H1 (cell line): ENCODE measurements at regions of chr9 and their contacts with region 1.

Region 1: GRCh38 chr9:131590908-131591844 is 45.9 kb downstream of the PRRT1B start:
- DNase-seq: peak; percentile 49 to 77
- H3K4me3 ChIP-seq: no peak overlapping the region
- H3K27ac ChIP-seq: no peak overlapping the region
- H3K4me1 ChIP-seq: no peaks in the 10 kb centered on the region
- H3K27me3 ChIP-seq: no peaks in the 10 kb centered on the region
- CTCF ChIP-seq: peak in 2 of 3 experiments; percentile 92 to 98; a peak in 3 of 4 replicates
- EP300 ChIP-seq: no peak
- POLR2A ChIP-seq: no peak
- RAD21 ChIP-seq: peak; percentile 93 to 95

Region 2: DNA sequence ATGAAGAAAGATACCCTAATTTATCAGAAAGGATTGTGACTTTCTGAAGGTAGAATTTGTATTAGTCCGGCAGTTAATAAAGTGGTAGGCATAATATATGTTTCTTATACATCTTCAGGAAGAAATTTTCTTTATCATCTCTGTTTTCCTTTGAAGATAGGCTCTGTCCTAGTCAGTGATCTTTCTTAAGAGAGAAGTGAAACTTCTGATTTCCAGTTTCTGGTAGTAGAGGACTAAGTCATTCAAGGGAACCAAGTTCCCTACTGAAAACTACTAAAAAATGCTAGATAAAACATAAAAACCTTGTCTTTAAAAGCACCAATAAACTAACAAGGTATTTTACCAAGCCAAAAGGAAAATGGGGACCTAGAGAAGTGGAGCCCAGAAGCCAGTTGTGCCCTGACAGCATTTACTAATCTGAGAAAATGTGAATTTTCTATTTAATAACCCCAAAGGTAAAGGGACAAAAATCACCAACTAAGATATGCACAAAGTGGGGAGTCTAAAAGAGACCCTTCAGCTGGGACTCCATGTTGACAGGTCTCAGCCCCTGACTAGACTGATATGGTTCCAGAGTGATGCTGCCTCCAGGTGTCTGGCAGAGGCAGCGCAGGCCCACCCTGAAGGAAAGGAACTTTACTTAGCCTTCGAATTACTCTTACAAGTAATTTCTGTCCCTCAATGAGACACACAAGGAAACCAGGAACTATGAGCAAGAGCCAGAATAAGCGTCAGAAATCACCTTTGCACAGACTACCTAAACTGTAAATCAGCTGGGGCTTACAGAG is 387.6 kb before region 1 on chr9:
- CTCF ChIA-PET with region 1: no interaction called
- POLR2A ChIA-PET with region 1: no interaction called
- DNase-seq: no peak
- H3K4me3 ChIP-seq: peak overlapping the region in 1 of 4 experiments; percentile 18; a peak in 1 of 8 replicates
- H3K27ac ChIP-seq: no peak overlapping the region
- H3K4me1 ChIP-seq: peaks cover 0 to 6% (median 2%) of the 10 kb centered on the region in 4 experiments; a peak in 2 of 7 replicates
- H3K27me3 ChIP-seq: no peaks in the 10 kb centered on the region
- CTCF ChIP-seq: peak; percentile 65 to 80 (median 79)
- EP300 ChIP-seq: no peak
- POLR2A ChIP-seq: no peak
- RAD21 ChIP-seq: peak; percentile 47 to 63

Region 3: DNA sequence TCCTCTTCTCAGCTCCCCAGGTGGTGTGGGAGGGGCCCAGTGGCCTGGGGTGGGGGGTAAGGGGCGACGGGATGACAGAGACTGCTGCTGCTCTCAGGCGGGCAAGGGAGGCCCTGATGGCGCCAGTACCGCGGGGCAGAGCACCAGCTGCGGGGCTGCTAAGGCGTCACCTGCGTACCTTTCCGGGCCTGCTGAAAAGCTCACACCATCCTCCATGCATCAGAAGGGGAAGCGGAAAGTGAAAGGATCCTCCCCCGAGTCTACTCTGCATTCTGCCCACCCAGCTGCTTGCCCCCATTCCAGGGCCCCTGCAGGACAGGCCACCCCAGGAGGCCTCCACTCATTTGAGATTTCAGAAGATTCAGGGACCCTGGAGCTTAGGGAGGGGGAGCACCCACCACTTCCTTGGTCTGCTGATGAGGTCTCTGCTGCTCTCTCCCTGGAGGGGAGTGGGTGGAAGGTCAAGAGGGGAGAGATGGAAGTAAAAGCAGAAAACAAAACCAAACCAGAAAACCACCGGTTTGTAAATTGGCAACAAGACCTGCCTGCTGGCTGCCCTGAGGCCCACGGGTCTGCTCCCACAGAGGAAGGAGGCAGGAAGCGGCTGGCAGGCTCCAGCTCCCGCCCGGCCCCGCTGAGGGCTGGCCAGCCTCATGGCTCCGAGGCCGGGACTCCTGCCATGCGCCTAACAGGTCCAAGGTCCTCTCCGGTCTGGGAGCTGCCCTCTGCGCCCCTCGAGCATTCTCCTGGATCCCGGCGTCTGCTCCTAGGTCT is 12.3 kb before region 1 on chr9:
- CTCF ChIA-PET with region 1: interaction called, 10 read pairs
- POLR2A ChIA-PET with region 1: no interaction called
- DNase-seq: no peak
- H3K4me3 ChIP-seq: no peak overlapping the region
- H3K27ac ChIP-seq: no peak overlapping the region
- H3K4me1 ChIP-seq: no peaks in the 10 kb centered on the region; a peak in 1 of 7 replicates
- H3K27me3 ChIP-seq: no peaks in the 10 kb centered on the region
- CTCF ChIP-seq: no peak
- EP300 ChIP-seq: no peak
- POLR2A ChIP-seq: no peak
- RAD21 ChIP-seq: no peak

Region 4: DNA sequence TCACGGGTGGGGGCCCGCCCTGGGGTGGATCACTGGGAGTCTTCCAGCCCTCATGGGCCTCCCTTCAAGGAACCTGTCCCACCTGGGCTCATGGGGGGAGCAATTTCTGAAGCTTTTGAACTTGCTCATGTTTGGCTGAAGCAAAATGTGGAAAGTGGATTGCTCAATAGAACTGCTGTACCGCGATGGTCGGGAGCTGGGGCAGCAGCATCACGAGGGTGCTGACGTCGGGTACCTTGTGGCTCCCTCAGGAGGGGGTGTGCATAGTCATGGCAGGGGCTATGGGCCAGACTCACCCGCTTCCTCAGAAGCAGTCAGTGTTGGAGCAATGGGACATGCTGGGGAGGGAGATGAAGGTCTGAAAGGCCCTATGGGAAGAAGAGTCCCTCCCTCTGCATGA is 12.0 kb after region 1 on chr9:
- CTCF ChIA-PET with region 1: interaction called, 21 read pairs
- POLR2A ChIA-PET with region 1: interaction called, 3 read pairs
- DNase-seq: no peak
- H3K4me3 ChIP-seq: no peak overlapping the region
- H3K27ac ChIP-seq: no peak overlapping the region
- H3K4me1 ChIP-seq: peaks cover 0 to 11% (median 7%) of the 10 kb centered on the region in 4 experiments; a peak in 6 of 7 replicates
- H3K27me3 ChIP-seq: no peaks in the 10 kb centered on the region
- CTCF ChIP-seq: no peak
- EP300 ChIP-seq: no peak
- POLR2A ChIP-seq: no peak
- RAD21 ChIP-seq: no peak

Region 5: DNA sequence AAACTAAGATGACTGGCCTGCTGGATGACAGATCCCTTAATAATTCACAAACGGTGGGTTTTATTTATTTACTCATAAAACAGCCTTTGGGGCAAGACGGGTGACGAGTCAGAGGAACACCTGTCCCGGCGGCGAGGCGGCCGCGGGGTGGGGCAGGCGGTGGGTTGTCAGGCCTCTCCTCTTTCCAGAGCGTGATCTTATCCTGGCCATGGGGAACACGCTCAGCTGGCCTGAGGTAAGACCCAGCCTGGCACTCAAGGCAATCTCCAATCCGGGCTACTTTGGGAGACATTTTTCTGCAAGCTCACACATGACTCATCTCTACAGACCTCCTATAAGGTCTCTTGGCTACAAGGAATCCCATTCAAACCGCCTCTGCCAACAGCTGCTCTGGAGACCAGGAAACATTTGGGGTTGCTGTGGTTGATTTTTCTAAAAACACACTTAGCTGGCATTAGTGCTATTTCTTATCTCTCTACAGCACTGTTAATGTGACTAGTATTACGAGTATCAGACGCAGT is 142.4 kb after region 1 on chr9:
- CTCF ChIA-PET with region 1: interaction called, 82 read pairs
- POLR2A ChIA-PET with region 1: no interaction called
- DNase-seq: no peak
- H3K4me3 ChIP-seq: no peak overlapping the region
- H3K27ac ChIP-seq: no peak overlapping the region
- H3K4me1 ChIP-seq: peaks cover 0 to 15% (median 4%) of the 10 kb centered on the region in 4 experiments; a peak in 5 of 7 replicates
- H3K27me3 ChIP-seq: no peaks in the 10 kb centered on the region
- CTCF ChIP-seq: no peak
- EP300 ChIP-seq: no peak
- POLR2A ChIP-seq: no peak
- RAD21 ChIP-seq: no peak

Region 6: DNA sequence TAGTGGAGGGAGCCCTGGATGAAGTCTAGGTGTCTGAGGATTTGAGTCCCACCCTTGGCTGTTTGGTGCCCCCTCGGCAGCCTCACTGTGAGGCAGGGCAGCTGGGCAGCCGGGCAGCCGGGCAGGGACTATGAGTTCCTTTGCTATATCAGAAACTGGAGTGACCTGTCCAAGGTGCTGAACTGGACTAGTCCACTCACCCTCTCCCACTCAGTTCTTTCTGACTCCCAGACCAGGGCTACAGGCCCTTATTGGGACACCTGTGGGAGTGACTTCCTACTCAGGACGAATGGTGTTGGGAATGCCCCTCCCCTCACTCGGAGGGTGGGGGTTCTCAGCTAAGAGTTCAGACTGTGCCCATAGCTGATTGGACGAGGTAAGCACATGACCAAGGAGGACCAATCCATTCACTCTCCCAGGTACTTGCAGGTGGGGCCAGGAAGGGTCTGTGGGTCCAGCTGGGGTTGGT is 182.8 kb after region 1 on chr9:
- CTCF ChIA-PET with region 1: no interaction called
- POLR2A ChIA-PET with region 1: no interaction called
- DNase-seq: peak in 1 of 2 experiments; percentile 79
- H3K4me3 ChIP-seq: no peak overlapping the region
- H3K27ac ChIP-seq: no peak overlapping the region
- H3K4me1 ChIP-seq: no peaks in the 10 kb centered on the region; a peak in 1 of 7 replicates
- H3K27me3 ChIP-seq: no peaks in the 10 kb centered on the region
- CTCF ChIP-seq: no peak
- EP300 ChIP-seq: no peak
- POLR2A ChIP-seq: no peak
- RAD21 ChIP-seq: no peak

Region 7: DNA sequence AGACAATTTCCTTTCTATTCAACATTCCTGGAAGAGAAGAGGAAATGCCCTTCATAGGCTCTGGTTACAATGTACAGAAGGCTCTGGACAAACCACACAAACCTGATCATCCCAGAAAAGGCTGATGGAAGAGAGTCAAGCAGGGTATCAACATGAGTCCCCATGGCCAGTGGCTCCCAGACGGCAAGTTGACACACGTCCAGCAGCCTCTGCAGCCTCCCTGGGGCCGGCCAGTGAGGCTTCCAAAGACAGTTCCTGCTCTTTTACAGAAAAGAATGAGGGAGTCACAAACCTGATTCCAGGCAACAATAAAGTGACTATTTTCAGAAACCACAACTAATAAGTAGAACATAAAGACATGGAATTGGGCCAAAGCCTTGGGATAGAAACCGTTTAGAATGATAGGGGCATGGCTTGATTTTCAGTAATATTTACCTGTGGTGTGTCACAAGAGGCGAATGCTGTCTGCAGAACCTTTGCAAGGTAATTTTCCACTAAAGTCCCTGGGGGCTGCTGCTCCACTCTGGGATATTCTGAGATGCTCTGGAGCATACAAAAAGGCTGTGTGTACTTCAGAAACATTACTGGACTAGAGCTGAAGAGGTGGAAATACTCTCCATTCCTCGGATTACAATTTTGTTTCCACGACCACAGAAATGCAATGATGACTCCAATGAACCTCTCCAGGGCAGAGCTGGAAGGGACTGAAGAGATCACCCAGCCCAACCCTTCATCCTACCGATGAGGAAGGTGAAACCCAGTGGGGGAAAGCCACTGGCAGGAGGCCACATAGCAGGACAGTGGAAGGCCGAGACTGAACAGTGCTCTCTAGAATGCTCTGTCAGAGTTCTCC is 478.1 kb after region 1 on chr9:
- CTCF ChIA-PET with region 1: no interaction called
- POLR2A ChIA-PET with region 1: no interaction called
- DNase-seq: no peak
- H3K4me3 ChIP-seq: no peak overlapping the region
- H3K27ac ChIP-seq: no peak overlapping the region
- H3K4me1 ChIP-seq: peaks cover 0 to 2% (median 0%) of the 10 kb centered on the region in 4 experiments; a peak in 3 of 7 replicates
- H3K27me3 ChIP-seq: no peaks in the 10 kb centered on the region
- CTCF ChIP-seq: no peak
- EP300 ChIP-seq: no peak
- POLR2A ChIP-seq: no peak
- RAD21 ChIP-seq: no peak